Sciatic nerve (tissue), 2 donors: ENCODE measurements at regions of chr5 and their contacts with region 1.

Region 1: GRCh38 chr5:180521101-180521500 is 26.9 kb downstream of the CNOT6 start:
- DNase-seq: no peak
- ATAC-seq: no peak

Region 2: GRCh38 chr5:180563994-180564393 is 42.9 kb after region 1 on chr5:
- intact Hi-C with region 1: loop called (anchors 2 kb)
- DNase-seq: no peak
- ATAC-seq: no peak